PC-3 (cell line): ENCODE measurements at regions of chr12 and their contacts with region 1.

Region 1: DNA sequence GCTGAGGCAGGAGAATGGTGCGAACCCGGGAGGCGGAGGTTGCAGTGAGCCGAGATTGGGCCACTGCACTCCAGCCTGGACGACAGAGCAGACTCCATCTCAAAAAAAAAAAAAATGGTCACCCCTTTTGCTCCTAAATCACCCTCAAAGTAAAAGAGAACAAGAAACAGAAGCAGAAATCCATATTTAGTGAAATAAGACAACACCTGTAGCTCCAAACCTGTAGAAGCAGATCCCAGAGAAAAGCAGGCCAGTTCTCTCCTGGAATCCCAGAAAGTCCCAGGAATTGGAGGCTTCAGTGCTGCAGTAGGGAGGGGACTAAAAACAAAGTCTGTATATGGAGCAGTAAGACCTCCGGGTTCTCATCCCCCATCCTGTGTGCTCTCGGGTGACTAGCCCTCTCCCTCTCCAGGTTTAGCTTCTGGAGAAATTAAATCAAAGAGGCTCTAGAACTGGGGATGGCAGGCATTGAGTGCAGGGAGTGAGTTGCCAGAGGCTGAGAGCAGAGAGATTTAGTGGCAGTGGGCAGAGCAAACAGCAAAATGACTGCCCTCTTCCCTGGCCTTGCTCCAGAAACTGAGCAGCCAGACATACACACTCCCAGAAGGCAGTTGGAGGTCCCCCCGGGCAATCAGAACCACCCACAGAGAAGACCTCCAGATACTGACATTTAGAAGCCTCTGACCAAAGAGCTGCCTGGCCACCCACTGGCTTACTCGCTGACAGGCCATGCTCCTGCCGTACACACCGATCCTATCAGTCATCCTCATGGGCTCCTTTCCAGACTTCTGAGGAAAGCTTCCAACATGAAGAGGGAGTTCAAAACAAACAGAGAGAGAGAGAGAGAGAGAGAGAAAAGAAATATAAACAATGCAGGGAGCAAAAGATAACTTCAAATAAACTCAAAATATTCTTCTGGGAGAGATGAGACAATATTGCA is 6.3 kb upstream of the MLXIP start:
- DNase-seq: peak; percentile 90
- ATAC-seq: peak; percentile 94
- H3K4me3 ChIP-seq: no peak overlapping the region
- H3K27ac ChIP-seq: peak overlapping the region; percentile 34
- H3K4me1 ChIP-seq: peaks cover 8% of the 10 kb centered on the region
- H3K27me3 ChIP-seq: no peaks in the 10 kb centered on the region
- CTCF ChIP-seq: no peak

Region 2: DNA sequence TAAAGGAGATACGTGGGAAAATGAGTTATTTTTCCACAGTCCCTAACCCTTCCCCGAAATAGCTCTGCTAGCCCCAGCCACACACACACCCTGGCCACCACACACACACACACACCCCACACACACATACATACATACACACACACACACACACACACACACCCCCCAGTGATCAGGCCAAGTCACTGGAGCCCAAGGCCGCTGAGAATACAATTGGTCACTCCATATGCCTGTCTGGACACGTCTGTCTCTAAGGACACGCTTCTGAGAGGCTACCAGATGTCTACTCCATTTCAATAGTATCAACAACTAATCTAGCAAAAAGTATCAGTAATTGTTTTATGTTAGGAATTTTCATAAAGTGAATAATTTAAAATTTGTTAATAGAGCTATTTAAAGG is 166.6 kb after region 1 on chr12:
- CTCF ChIA-PET with region 1: no interaction called
- POLR2A ChIA-PET with region 1: interaction called, 10 read pairs
- intact Hi-C with region 1: no loop called
- DNase-seq: no peak
- ATAC-seq: no peak
- H3K4me3 ChIP-seq: no peak overlapping the region
- H3K27ac ChIP-seq: no peak overlapping the region
- H3K4me1 ChIP-seq: no peaks in the 10 kb centered on the region
- H3K27me3 ChIP-seq: no peaks in the 10 kb centered on the region
- CTCF ChIP-seq: no peak